ENCODE measurements at regions of chr6 and their contacts with region 1.

Region 1: GRCh38 chr6:19851241-19852089 is 14.3 kb downstream of the ID4 start:
- DNase-seq: no peak
- ATAC-seq: peak; percentile 89
- H3K4me3 ChIP-seq: peak overlapping the region in 1 of 2 donors; percentile 52
- H3K27ac ChIP-seq: peak overlapping the region; percentile 61 to 100
- H3K4me1 ChIP-seq: peaks cover 3 to 9% of the 10 kb centered on the region in 2 donors
- H3K27me3 ChIP-seq: no peaks in the 10 kb centered on the region

Region 2: GRCh38 chr6:18742406-18742805 is 1109.1 kb before region 1 on chr6:
- intact Hi-C with region 1: loop called (anchors 5 to 10 kb)
- DNase-seq: no peak
- ATAC-seq: no peak
- H3K4me3 ChIP-seq: no peak overlapping the region
- H3K27ac ChIP-seq: no peak overlapping the region
- H3K4me1 ChIP-seq: no peaks in the 10 kb centered on the region
- H3K27me3 ChIP-seq: no peaks in the 10 kb centered on the region

Region 3: GRCh38 chr6:18990059-18990978 is 861.1 kb before region 1 on chr6:
- intact Hi-C with region 1: loop called in 1 of 2 experiments (anchors 10 kb)
- DNase-seq: peak; percentile 62 to 88
- ATAC-seq: peak; percentile 41
- H3K4me3 ChIP-seq: no peak overlapping the region
- H3K27ac ChIP-seq: no peak overlapping the region
- H3K4me1 ChIP-seq: no peaks in the 10 kb centered on the region
- H3K27me3 ChIP-seq: no peaks in the 10 kb centered on the region

Region 4: GRCh38 chr6:19024737-19025136 is 826.7 kb before region 1 on chr6:
- intact Hi-C with region 1: loop called (anchors 2 kb)
- DNase-seq: no peak
- ATAC-seq: peak; percentile 67
- H3K4me3 ChIP-seq: no peak overlapping the region
- H3K27ac ChIP-seq: no peak overlapping the region
- H3K4me1 ChIP-seq: peaks cover 0 to 5% of the 10 kb centered on the region in 2 donors
- H3K27me3 ChIP-seq: no peaks in the 10 kb centered on the region